GM12878 (cell line): ENCODE measurements at regions of chr18 and their contacts with region 1.

Region 1: GRCh38 chr18:56869189-56869777 is 218.1 kb downstream of the WDR7 start:
- DNase-seq: peak; percentile 11
- ATAC-seq: peak; percentile 86
- H3K4me3 ChIP-seq: no peak overlapping the region
- H3K27ac ChIP-seq: no peak overlapping the region
- H3K4me1 ChIP-seq: no peaks in the 10 kb centered on the region
- H3K27me3 ChIP-seq: no peaks in the 10 kb centered on the region
- CTCF ChIP-seq: peak; percentile 73 to 78 (median 75)
- EP300 ChIP-seq: no peak
- POLR2A ChIP-seq: no peak
- RAD21 ChIP-seq: peak; percentile 91

Region 2: DNA sequence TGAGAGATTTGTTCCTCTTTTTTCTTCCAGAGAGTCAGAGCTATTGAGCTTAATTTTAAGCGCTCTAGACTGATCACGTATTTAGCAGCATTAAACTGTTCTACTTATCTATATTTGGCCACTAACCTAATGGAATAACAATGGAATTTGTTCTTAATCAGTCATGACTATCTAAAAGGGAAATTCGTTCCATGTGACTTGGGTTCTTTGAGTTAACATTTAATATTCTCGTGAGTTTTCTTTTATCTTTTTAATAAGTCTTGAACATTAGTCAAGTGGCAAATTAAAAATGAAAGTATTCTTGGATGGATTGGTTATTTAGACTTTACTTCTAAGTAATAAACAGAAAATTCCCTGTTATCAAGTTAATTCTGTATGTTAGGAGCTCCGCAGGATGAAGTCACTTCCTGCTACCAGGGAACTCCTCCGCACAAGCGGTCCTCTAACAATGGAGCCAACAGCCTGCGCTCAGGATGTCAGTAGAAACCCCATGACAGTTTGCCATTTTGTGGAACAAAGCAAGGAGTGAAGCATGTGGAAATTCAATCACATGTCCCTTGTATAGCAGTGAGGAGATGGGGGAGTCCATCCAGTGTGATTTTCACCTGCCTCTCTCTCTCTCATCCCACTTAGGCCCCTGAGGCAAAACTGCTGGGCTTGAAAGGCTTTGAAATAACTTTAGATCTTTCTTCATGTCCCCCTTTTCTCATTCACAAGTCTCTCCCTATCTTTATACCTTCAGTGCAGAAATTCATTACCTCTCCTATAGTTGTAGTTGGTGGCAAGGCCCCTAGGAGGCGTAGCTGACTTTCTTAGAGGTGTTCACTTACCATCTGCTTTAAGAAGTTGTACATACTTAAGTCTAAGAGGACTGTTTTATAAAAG is 80.0 kb before region 1 on chr18:
- CTCF ChIA-PET with region 1: interaction called, 11 read pairs
- POLR2A ChIA-PET with region 1: no interaction called
- RAD21 ChIA-PET with region 1: interaction called, 12 read pairs
- SMC1A ChIA-PET with region 1: interaction called, 8 read pairs
- in situ Hi-C with region 1: no loop called
- intact Hi-C with region 1: no loop called
- DNase-seq: no peak
- ATAC-seq: peak; percentile 89
- H3K4me3 ChIP-seq: no peak overlapping the region
- H3K27ac ChIP-seq: no peak overlapping the region
- H3K4me1 ChIP-seq: no peaks in the 10 kb centered on the region
- H3K27me3 ChIP-seq: no peaks in the 10 kb centered on the region
- CTCF ChIP-seq: peak; percentile 65 to 67 (median 66)
- EP300 ChIP-seq: no peak
- POLR2A ChIP-seq: no peak
- RAD21 ChIP-seq: peak; percentile 71

Region 3: DNA sequence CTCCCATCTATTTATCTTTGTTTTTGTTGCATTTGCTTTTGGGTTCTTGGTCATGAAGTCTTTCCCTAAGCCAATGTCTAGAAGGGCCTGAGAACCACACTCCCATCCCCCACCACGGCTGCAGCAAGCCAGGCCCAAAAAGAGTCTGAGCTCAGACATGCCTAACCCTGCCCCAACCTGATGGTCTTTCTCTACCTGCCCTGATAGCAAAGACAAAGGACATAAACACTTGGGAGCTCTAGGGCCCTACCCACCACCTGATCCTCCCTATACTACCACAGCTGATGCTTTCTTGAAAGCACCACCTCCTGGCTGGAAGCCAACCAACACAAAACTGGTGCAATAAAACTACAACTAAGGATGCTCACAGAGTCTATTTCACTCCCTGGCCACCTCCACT is 15.2 kb after region 1 on chr18:
- CTCF ChIA-PET with region 1: interaction called, 32 read pairs
- POLR2A ChIA-PET with region 1: interaction called, 6 read pairs
- RAD21 ChIA-PET with region 1: interaction called, 5 read pairs
- SMC1A ChIA-PET with region 1: interaction called, 7 read pairs
- in situ Hi-C with region 1: no loop called
- intact Hi-C with region 1: no loop called
- DNase-seq: no peak
- ATAC-seq: no peak
- H3K4me3 ChIP-seq: no peak overlapping the region
- H3K27ac ChIP-seq: no peak overlapping the region
- H3K4me1 ChIP-seq: no peaks in the 10 kb centered on the region
- H3K27me3 ChIP-seq: no peaks in the 10 kb centered on the region
- CTCF ChIP-seq: no peak
- EP300 ChIP-seq: no peak
- POLR2A ChIP-seq: no peak
- RAD21 ChIP-seq: no peak

Region 4: DNA sequence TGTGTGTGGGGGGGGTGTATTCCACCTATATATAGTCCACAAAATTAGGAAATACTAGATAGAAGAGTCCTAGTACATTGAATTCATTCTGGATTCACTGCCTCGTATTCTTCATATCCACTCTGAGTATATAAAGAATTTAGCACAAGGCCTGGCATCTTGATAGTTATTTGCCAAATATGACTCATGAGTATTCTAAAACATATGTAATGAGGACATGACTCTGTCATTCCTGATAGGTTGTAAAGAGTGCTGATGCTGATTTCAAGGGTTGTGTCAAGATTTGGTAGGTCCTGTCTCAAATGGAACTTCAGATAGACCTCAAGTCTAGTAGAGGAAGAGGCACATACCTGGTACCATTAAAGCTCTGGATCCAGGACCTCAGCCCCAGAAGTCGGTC is 104.2 kb after region 1 on chr18:
- CTCF ChIA-PET with region 1: no interaction called
- POLR2A ChIA-PET with region 1: no interaction called
- RAD21 ChIA-PET with region 1: no interaction called
- SMC1A ChIA-PET with region 1: no interaction called
- in situ Hi-C with region 1: no loop called
- intact Hi-C with region 1: no loop called
- DNase-seq: no peak
- ATAC-seq: no peak
- H3K4me3 ChIP-seq: no peak overlapping the region
- H3K27ac ChIP-seq: no peak overlapping the region
- H3K4me1 ChIP-seq: no peaks in the 10 kb centered on the region
- H3K27me3 ChIP-seq: no peaks in the 10 kb centered on the region
- CTCF ChIP-seq: no peak
- EP300 ChIP-seq: no peak
- POLR2A ChIP-seq: no peak
- RAD21 ChIP-seq: no peak

Region 5: DNA sequence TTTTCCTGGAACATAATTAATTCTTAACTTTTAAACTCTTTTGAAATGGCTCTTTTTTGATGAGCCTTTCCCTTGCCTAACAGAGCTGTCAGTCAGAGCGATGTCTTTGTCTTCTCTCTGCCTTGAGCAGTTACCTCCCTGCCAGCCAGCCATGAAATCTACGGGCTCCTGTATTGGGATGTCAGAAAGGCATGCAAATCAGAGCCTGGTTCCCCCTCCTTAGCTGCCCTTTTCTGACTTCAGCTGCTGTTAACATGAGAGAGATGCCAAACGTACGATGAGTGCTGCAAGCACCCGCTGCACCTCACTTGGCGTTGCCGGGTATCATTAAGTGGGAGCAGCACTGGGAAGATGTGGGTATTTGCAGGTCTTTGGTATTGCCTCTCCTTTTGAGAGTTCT is 146.2 kb after region 1 on chr18:
- CTCF ChIA-PET with region 1: interaction called, 14 read pairs
- POLR2A ChIA-PET with region 1: no interaction called
- RAD21 ChIA-PET with region 1: no interaction called
- SMC1A ChIA-PET with region 1: interaction called, 22 read pairs
- in situ Hi-C with region 1: no loop called
- intact Hi-C with region 1: no loop called
- DNase-seq: no peak
- ATAC-seq: no peak
- H3K4me3 ChIP-seq: no peak overlapping the region
- H3K27ac ChIP-seq: no peak overlapping the region
- H3K4me1 ChIP-seq: peaks cover 12% of the 10 kb centered on the region
- H3K27me3 ChIP-seq: no peaks in the 10 kb centered on the region
- CTCF ChIP-seq: no peak
- EP300 ChIP-seq: no peak
- POLR2A ChIP-seq: no peak
- RAD21 ChIP-seq: no peak

Region 6: DNA sequence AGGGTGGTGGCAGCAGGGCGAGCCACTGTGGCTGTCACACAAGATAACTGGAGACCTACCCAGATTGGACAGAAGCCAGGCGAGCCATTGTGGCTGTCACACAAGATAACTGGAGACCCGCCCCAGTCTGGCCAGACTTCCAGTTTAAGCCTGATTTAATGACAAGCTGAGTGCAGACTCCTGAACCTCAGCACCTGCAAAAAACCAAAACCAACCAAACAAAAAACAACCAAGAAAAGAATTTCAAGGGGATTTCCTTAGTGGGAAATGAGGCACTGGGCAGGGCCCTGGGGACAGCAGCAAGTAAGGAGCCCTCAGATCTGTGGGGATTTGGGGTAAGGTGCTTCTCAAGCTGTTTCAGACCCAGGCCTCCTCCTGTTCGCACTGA is 182.4 kb after region 1 on chr18:
- CTCF ChIA-PET with region 1: interaction called, 19 read pairs
- POLR2A ChIA-PET with region 1: no interaction called
- RAD21 ChIA-PET with region 1: interaction called, 11 read pairs
- SMC1A ChIA-PET with region 1: interaction called, 6 read pairs
- in situ Hi-C with region 1: no loop called
- intact Hi-C with region 1: loop called (anchors 5 kb)
- DNase-seq: peak; percentile 47
- ATAC-seq: peak; percentile 89
- H3K4me3 ChIP-seq: no peak overlapping the region
- H3K27ac ChIP-seq: no peak overlapping the region
- H3K4me1 ChIP-seq: peaks cover 11% of the 10 kb centered on the region
- H3K27me3 ChIP-seq: no peaks in the 10 kb centered on the region
- CTCF ChIP-seq: no peak
- EP300 ChIP-seq: peak in 1 of 2 experiments; percentile 47; a peak in 1 of 4 replicates
- POLR2A ChIP-seq: no peak
- RAD21 ChIP-seq: no peak

Region 7: DNA sequence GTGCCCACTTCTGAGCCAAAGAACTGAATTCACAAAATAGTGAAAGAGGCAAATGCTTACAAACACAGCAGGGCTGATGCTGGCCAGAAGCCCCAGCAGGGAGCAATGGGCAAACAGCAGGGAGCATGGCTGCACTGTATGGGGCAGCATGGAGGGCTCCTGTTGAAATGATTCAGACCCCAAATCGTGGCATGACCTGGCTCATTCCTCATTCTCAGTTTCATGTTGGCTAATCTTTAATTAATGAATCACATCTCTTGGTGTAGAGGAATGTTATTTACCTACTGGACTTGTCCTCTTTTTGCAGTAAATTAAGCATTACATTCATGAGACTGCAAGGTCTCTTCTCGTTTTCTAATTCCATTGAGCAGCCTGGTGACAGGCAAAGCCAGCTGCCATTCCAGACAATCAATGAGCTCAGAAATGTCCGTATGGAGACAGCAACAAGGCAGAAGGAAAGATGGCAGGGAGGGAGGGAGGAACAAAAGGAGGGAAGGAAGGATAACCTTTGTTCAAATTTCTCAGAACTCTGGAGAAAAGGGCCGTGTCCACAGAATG is 398.2 kb after region 1 on chr18:
- CTCF ChIA-PET with region 1: no interaction called
- POLR2A ChIA-PET with region 1: no interaction called
- RAD21 ChIA-PET with region 1: no interaction called
- SMC1A ChIA-PET with region 1: no interaction called
- in situ Hi-C with region 1: no loop called
- intact Hi-C with region 1: no loop called
- DNase-seq: no peak
- ATAC-seq: no peak
- H3K4me3 ChIP-seq: no peak overlapping the region
- H3K27ac ChIP-seq: no peak overlapping the region
- H3K4me1 ChIP-seq: no peaks in the 10 kb centered on the region
- H3K27me3 ChIP-seq: no peaks in the 10 kb centered on the region; a peak in 1 of 4 replicates
- CTCF ChIP-seq: no peak
- EP300 ChIP-seq: no peak
- POLR2A ChIP-seq: no peak
- RAD21 ChIP-seq: no peak

Region 8: DNA sequence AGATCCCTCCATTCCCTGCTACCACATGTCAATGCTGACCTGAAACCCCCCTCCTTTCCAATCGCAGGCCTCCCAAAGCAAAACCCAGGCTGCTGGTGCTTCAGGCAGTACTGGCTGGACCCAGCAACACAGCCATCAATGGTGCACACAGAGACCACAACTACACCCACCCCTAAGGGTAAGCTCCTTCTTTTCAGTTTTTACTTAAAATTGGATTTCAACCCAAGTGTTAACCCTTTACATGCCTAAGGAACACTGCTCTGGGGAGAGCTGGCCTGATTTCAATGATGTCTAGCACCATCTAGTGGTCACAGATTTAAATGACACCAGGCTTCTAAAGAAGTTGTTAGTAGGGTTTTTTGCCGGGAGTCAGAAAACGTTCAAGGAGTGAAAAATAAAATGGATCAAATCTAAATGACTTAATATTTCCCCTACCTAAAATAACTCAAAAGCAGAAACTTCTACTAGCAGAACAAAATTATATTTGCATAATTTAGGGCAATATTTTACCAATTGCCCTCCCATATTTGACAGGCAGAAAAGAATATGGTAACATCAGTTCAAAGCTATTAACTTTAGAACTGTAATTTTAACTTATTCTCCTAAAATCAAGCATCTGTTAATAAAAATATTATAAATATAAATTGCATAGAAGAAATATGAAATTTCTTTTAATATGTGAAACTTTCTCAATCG is 692.6 kb after region 1 on chr18:
- CTCF ChIA-PET with region 1: interaction called, 24 read pairs
- POLR2A ChIA-PET with region 1: no interaction called
- RAD21 ChIA-PET with region 1: interaction called, 12 read pairs
- SMC1A ChIA-PET with region 1: interaction called, 10 read pairs
- in situ Hi-C with region 1: loop called (anchors 5 kb)
- intact Hi-C with region 1: loop called (anchors 2 kb)
- DNase-seq: no peak
- ATAC-seq: peak; percentile 77
- H3K4me3 ChIP-seq: no peak overlapping the region
- H3K27ac ChIP-seq: no peak overlapping the region
- H3K4me1 ChIP-seq: no peaks in the 10 kb centered on the region
- H3K27me3 ChIP-seq: no peaks in the 10 kb centered on the region
- CTCF ChIP-seq: peak; percentile 61 to 73 (median 71)
- EP300 ChIP-seq: no peak
- POLR2A ChIP-seq: no peak
- RAD21 ChIP-seq: peak; percentile 85